Dendritic cell treated with granulocyte-macrophage colony-stimulating factor and Interleukin-4, amounts not matched to agents 40 ng/mL and 50 ng/mL, for 4 days (primary cell): ENCODE measurements at regions of chr16 and their contacts with region 1.

Region 1: GRCh38 chr16:4734063-4734729 is at the starts of genes ANKS3 and DNAAF8:
- H3K4me3 Mint-ChIP-seq: peak within 1 kb of the TSS; percentile 99
- H3K27ac Mint-ChIP-seq: peak within 1 kb of the TSS; percentile 91
- H3K4me1 Mint-ChIP-seq: peaks cover 20% of the 10 kb centered on the region
- H3K27me3 Mint-ChIP-seq: no peaks in the 10 kb centered on the region

Region 2: GRCh38 chr16:4693296-4693955 is 40.8 kb before region 1 on chr16 and contains the start of gene NUDT16L1:
- intact Hi-C with region 1: loop called (anchors 1 kb)
- H3K4me3 Mint-ChIP-seq: peak within 1 kb of the TSS; percentile 82
- H3K27ac Mint-ChIP-seq: peak within 1 kb of the TSS; percentile 86
- H3K4me1 Mint-ChIP-seq: peaks cover 63% of the 10 kb centered on the region
- H3K27me3 Mint-ChIP-seq: no peaks in the 10 kb centered on the region

Region 3: DNA sequence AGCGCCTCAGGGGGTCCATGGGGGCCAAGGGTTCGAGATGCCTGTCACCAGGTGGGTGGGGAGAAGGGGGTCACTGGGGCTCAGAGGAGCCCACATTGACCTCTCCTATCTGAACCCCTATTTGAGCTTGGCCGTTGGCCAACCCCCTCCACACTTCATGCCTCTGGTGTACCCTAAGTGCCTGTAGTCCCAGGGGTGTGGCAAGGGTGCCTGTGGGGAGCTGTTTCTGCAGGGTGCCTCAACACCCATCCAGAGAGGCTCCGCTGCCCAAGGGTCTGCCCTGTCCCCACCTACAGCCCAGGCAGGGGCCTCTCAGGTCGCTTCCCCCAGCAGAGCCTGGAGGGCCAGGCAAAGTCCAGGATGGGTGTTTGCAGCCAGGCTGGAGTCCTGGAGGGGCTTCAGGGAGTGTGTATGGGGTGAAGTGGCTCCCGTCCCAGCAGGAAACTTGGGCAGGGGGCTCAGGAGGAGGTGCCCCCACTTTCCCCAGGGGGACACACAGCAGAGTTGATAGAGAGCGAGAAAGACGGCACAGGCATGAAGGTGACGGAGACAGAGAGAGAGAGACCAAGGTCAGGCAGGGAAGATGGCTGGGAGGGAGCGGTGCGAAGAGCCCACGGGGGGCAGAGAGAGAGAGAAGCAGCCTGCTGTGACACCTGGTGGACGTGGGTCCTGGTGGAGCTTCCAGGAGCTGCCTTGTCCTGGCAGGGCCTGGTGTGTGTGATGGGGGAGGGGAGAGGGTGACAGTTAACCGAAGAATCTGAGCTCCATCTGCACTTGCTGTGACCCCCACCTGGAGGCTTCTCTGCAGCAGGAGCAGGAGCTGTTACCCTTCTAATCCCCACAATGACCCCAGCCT is 53.7 kb after region 1 on chr16 and contains the start of gene SEPTIN12:
- intact Hi-C with region 1: no loop called
- H3K4me3 Mint-ChIP-seq: no peak within 1 kb of the TSS
- H3K27ac Mint-ChIP-seq: no peak within 1 kb of the TSS
- H3K4me1 Mint-ChIP-seq: peaks cover 5% of the 10 kb centered on the region
- H3K27me3 Mint-ChIP-seq: peaks cover 9% of the 10 kb centered on the region

Region 4: GRCh38 chr16:4802659-4803287 is 68.6 kb after region 1 on chr16:
- intact Hi-C with region 1: loop called (anchors 2 kb)
- H3K4me3 Mint-ChIP-seq: peak overlapping the region; percentile 92
- H3K27ac Mint-ChIP-seq: peak overlapping the region; percentile 97
- H3K4me1 Mint-ChIP-seq: peaks cover 63% of the 10 kb centered on the region
- H3K27me3 Mint-ChIP-seq: no peaks in the 10 kb centered on the region